PC-9 (cell line): ENCODE measurements at regions of chr6 and their contacts with region 1.

Region 1: GRCh38 chr6:26342106-26343004 is 22.6 kb upstream of the BTN3A2 start:
- DNase-seq: no peak
- H3K4me3 ChIP-seq: no peak overlapping the region
- H3K27ac ChIP-seq: no peak overlapping the region
- H3K4me1 ChIP-seq: peaks cover under 1% of the 10 kb centered on the region; the same call in 1 of the 2 replicates
- H3K27me3 ChIP-seq: no peaks in the 10 kb centered on the region
- CTCF ChIP-seq: no peak

Region 2: DNA sequence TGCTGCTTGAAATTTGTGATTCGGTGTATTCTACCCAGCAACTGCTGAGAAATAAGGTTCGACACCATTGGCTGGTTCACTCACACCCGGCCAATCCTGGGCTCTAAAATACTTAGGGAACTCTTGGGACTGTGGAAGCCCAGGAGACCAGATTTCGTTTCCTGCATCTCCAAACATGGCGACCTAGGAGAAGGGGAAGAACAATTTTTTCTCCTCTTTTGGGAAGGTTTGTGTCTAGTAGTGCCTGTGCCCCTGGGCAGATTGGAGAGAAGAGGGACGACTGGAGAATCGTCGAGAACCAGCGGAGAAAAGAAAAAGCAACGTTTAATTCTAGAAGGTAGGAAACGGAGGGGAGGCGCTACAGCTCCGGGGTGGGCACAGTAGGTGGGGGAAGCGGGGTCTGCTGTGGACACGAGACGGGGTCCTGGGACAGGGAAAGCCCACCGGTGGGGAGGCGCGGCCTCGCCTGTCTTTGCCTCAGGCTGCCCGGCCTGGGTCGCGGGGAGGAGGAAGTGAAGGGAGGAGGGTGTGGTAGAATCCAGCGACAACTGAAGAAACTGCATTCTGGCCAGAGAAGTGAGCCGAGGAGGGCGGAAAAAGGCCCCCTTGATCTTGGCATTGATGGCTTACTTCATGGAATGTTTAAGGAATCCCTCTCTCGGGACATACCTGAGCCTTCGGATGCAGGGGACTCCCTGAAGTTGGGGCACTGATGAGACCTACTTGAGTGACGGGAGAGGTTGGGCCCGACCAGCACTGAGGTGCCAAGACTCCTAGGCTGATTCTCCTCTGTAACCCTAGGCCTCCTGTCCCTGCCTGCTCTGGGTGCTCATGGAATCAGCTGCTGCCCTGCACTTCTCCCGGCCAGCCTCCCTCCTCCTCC is 115.7 kb after region 1 on chr6 and contains the start of gene BTN2A1:
- CTCF ChIA-PET with region 1: no interaction called
- POLR2A ChIA-PET with region 1: no interaction called
- intact Hi-C with region 1: loop called (anchors 10 kb)
- DNase-seq: peak; percentile 71 to 85
- H3K4me3 ChIP-seq: peak within 1 kb of the TSS; percentile 72
- H3K27ac ChIP-seq: peak within 1 kb of the TSS; percentile 70
- H3K4me1 ChIP-seq: peaks cover 6% of the 10 kb centered on the region
- H3K27me3 ChIP-seq: no peaks in the 10 kb centered on the region
- CTCF ChIP-seq: no peak
- total RNA-seq, gene BTN2A1: 19.5 and 23.4 TPM in 2 replicates

Region 3: DNA sequence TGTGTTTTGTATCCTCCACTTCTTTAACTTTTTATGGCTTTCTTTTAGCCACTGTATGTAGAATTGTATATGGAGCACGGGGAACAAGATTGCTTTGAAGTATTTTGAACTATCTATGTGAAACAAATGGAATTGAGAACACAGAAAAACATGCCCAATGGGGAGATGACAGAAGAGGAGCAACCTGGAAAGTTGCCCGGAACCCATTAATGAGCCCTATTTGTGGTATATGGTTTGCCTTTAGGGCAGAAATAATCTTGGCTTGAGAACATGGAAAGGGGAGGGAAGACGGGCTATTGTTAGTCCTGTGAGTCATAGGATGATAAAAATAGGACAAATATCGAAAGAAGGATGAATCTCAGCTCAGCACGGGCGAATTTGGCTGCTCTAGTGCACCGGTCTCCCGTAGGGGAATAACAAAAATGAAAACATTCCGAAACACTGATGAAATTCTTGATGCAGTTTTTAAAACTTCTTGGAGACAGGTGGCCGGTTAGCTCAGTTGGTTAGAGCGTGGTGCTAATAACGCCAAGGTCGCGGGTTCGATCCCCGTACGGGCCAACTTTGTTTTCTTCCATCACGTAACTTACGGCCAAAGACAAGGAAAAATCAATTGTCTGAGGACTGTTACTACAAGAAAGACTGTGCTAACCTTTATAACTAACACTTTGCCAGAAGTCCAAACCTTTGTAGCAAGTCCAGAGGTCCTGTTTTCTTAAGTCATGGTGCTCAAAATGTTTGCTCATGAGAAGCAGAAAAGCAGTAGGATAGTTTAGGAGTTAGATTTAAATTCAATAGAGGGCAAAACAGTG is 211.5 kb after region 1 on chr6:
- CTCF ChIA-PET with region 1: interaction called, 3 read pairs
- POLR2A ChIA-PET with region 1: interaction called, 8 read pairs
- intact Hi-C with region 1: loop called (anchors 5 kb)
- DNase-seq: peak; percentile 85 to 87
- H3K4me3 ChIP-seq: peak overlapping the region; percentile 69
- H3K27ac ChIP-seq: peak overlapping the region; percentile 60
- H3K4me1 ChIP-seq: peaks cover 31% of the 10 kb centered on the region
- H3K27me3 ChIP-seq: no peaks in the 10 kb centered on the region
- CTCF ChIP-seq: no peak

Region 4: GRCh38 chr6:27931209-27931608 is 1588.9 kb after region 1 on chr6:
- CTCF ChIA-PET with region 1: no interaction called
- POLR2A ChIA-PET with region 1: no interaction called
- intact Hi-C with region 1: no loop called
- DNase-seq: no peak
- H3K4me3 ChIP-seq: no peak overlapping the region
- H3K27ac ChIP-seq: no peak overlapping the region
- H3K4me1 ChIP-seq: no peaks in the 10 kb centered on the region
- H3K27me3 ChIP-seq: no peaks in the 10 kb centered on the region
- CTCF ChIP-seq: no peak